CD4-positive, alpha-beta T cell (primary cell): ENCODE measurements at regions of chrX and their contacts with region 1.

Region 1: DNA sequence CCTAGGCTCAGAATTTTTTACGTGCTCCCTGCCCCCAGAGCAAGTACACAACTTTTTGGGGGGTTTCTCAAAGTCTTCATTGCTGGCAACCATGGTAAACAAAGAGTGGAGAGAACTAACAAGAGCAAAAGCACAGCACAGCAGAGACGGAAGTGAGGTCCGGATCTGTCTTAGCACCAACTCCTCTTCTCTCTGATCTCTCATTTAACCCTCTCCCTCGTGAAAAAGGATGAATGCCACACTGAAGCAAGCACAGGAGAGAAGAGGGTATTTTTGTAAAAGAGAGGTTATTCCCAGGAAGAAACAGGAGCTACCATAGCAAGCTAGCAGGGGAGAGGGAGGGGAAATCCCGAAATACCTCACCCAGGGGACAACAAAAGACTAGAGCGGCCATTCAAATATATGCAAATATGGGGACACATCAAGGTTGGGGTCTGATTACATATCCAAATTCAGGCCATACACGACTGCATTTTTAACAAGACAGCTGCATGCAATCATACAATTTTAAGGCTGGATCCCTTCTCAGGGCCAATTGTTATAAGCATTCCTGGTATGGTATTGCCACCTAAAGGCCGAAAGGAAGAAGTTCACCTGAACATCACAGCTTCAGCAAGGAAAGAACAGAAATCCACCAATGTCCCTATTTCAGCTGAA is 46.6 kb downstream of the CD40LG start:
- DNase-seq: peak in 10 of 14 experiments; percentile 6 to 83 (median 23)
- ATAC-seq: peak; percentile 70
- H3K4me3 ChIP-seq: peak overlapping the region; percentile 33
- H3K4me3 Mint-ChIP-seq: peak overlapping the region; percentile 71
- H3K27ac ChIP-seq: peak overlapping the region; percentile 81 to 87
- H3K27ac Mint-ChIP-seq: peak overlapping the region; percentile 95
- H3K4me1 ChIP-seq: peaks cover 50% of the 10 kb centered on the region
- H3K4me1 Mint-ChIP-seq: peaks cover 79% of the 10 kb centered on the region
- H3K27me3 ChIP-seq: no peaks in the 10 kb centered on the region
- H3K27me3 Mint-ChIP-seq: no peaks in the 10 kb centered on the region
- CTCF ChIP-seq: peak; percentile 66

Region 2: GRCh38 chrX:136496770-136497598 is 197.6 kb before region 1 on chrX and contains the start of gene HTATSF1:
- CTCF ChIA-PET with region 1: no interaction called
- POLR2A ChIA-PET with region 1: interaction called, 4 read pairs
- intact Hi-C with region 1: loop called in 1 of 2 experiments (anchors 5 kb)
- DNase-seq: peak; percentile 71 to 94 (median 82)
- ATAC-seq: peak; percentile 75
- H3K4me3 ChIP-seq: peak within 1 kb of the TSS; percentile 88
- H3K4me3 Mint-ChIP-seq: peak within 1 kb of the TSS; percentile 96
- H3K27ac ChIP-seq: peak within 1 kb of the TSS; percentile 83 to 85
- H3K27ac Mint-ChIP-seq: peak within 1 kb of the TSS; percentile 100
- H3K4me1 ChIP-seq: peaks cover 7% of the 10 kb centered on the region
- H3K4me1 Mint-ChIP-seq: peaks cover 26% of the 10 kb centered on the region
- H3K27me3 ChIP-seq: no peaks in the 10 kb centered on the region
- H3K27me3 Mint-ChIP-seq: no peaks in the 10 kb centered on the region
- CTCF ChIP-seq: no peak
- total RNA-seq, gene HTATSF1: 28.3 to 31.1 TPM

Region 3: DNA sequence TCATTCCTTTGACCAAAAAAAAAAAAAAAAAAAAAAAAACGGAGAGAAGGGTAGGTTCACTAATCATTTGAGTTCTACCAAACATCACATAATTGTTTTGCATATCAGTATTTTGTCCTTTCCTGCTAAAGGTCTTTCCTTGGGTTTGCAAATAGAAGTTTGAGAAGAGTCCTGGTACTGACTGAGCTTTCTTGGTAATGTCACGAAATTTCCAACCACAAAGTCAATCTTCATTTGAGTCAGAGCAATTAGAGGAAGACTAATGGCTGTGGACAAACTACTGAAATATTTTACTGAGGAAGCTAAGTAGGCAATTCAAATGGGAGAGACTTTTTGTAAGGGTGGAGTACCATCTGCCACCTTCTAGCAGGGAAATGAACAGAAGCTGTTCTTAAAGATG is 68.3 kb before region 1 on chrX:
- CTCF ChIA-PET with region 1: interaction called, 13 read pairs
- POLR2A ChIA-PET with region 1: interaction called, 7 read pairs
- intact Hi-C with region 1: loop called in 1 of 2 experiments (anchors 10 kb)
- DNase-seq: no peak
- ATAC-seq: no peak
- H3K4me3 ChIP-seq: no peak overlapping the region
- H3K4me3 Mint-ChIP-seq: peak overlapping the region; percentile 31
- H3K27ac ChIP-seq: peak overlapping the region in 1 of 2 donors; percentile 62
- H3K27ac Mint-ChIP-seq: peak overlapping the region; percentile 69
- H3K4me1 ChIP-seq: peaks cover 66% of the 10 kb centered on the region
- H3K4me1 Mint-ChIP-seq: peaks cover 98% of the 10 kb centered on the region
- H3K27me3 ChIP-seq: no peaks in the 10 kb centered on the region
- H3K27me3 Mint-ChIP-seq: no peaks in the 10 kb centered on the region
- CTCF ChIP-seq: no peak

Region 4: GRCh38 chrX:136652822-136653723 is 41.5 kb before region 1 on chrX:
- CTCF ChIA-PET with region 1: interaction called, 10 read pairs
- POLR2A ChIA-PET with region 1: interaction called, 32 read pairs
- intact Hi-C with region 1: loop called (anchors 2 to 5 kb)
- DNase-seq: peak in 6 of 14 experiments; percentile 11 to 44 (median 29)
- ATAC-seq: peak; percentile 50
- H3K4me3 ChIP-seq: peak overlapping the region; percentile 80
- H3K4me3 Mint-ChIP-seq: peak overlapping the region; percentile 99
- H3K27ac ChIP-seq: peak overlapping the region; percentile 58 to 67
- H3K27ac Mint-ChIP-seq: peak overlapping the region; percentile 92
- H3K4me1 ChIP-seq: peaks cover 38% of the 10 kb centered on the region
- H3K4me1 Mint-ChIP-seq: peaks cover 69% of the 10 kb centered on the region
- H3K27me3 ChIP-seq: no peaks in the 10 kb centered on the region
- H3K27me3 Mint-ChIP-seq: no peaks in the 10 kb centered on the region
- CTCF ChIP-seq: no peak

Region 5: DNA sequence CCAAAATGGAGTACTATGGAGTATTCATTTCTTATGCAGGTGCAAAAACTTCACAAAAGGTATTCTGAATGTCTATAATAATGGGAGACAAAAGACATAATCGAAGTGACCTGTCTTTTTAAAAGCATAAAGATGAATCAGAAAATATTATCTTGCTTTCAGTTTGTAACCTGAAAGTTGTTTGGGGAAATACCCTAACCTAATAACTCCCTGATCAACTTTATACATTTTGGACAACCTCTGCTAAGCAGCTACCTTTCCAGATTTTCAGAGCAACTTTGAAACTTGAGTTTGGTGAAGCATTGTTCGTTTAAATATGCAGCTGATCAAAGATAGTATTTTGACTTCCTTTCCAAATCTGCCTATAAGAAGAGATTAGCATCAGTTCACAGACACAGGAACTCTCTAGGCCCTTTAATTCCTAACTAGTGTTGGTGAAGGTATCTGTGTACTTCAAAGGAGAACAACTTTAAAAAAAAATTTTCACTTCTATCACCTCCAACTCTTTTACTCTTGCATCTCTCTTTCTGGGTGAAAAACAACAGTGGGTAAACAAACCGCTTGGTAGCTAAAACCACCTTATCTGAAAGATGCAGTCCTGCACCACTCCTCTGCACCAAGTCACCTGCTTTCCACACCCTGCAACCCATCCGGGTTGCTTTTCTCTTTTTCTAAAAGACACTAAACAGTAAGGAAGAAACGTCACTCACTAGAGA is 20.1 kb before region 1 on chrX:
- CTCF ChIA-PET with region 1: interaction called, 3 read pairs
- POLR2A ChIA-PET with region 1: interaction called, 16 read pairs
- intact Hi-C with region 1: loop called (anchors 2 kb)
- DNase-seq: peak in 7 of 14 experiments; percentile 11 to 79 (median 45)
- ATAC-seq: peak; percentile 78
- H3K4me3 ChIP-seq: no peak overlapping the region
- H3K4me3 Mint-ChIP-seq: peak overlapping the region; percentile 89
- H3K27ac ChIP-seq: peak overlapping the region; percentile 29 to 61
- H3K27ac Mint-ChIP-seq: peak overlapping the region; percentile 95
- H3K4me1 ChIP-seq: peaks cover 60% of the 10 kb centered on the region
- H3K4me1 Mint-ChIP-seq: peaks cover 96% of the 10 kb centered on the region
- H3K27me3 ChIP-seq: no peaks in the 10 kb centered on the region
- H3K27me3 Mint-ChIP-seq: no peaks in the 10 kb centered on the region
- CTCF ChIP-seq: no peak

Region 6: DNA sequence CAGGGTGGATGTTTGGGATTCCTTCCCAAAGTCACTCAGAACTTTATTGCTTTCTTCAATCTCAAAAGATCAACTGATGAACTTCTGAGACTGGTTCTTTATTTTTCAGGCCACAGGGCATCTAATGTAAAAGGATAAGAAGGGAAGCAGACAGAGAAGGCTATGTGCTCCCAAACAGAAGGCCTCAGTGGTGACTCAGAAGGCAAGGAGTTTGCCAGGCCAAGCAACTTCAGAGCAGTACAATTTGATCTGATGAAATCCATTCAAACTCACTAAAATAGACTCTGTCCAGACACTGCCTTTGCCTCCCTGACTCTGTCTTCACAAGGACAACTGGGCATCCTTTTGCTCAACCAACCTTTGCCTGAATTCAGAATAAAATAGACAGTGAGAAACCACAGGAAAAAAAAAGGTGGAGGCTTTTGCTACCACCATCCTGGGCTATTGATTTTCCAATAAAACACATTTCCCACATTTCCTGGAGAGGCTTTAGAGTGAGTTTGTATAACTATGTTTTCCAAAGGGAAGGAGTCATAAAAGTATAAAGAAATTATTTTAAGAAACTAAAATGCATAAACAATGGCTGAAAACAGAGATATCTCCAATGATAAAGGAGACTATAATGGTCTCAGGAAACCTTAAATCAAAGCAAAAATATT is 31.0 kb after region 1 on chrX:
- CTCF ChIA-PET with region 1: no interaction called
- POLR2A ChIA-PET with region 1: no interaction called
- intact Hi-C with region 1: no loop called
- DNase-seq: no peak
- ATAC-seq: no peak
- H3K4me3 ChIP-seq: no peak overlapping the region
- H3K4me3 Mint-ChIP-seq: no peak overlapping the region
- H3K27ac ChIP-seq: no peak overlapping the region
- H3K27ac Mint-ChIP-seq: no peak overlapping the region
- H3K4me1 ChIP-seq: peaks cover 14% of the 10 kb centered on the region
- H3K4me1 Mint-ChIP-seq: peaks cover 21% of the 10 kb centered on the region
- H3K27me3 ChIP-seq: no peaks in the 10 kb centered on the region
- H3K27me3 Mint-ChIP-seq: no peaks in the 10 kb centered on the region
- CTCF ChIP-seq: no peak